ENCODE measurements at regions of chr1 and their contacts with region 1.

Region 1: DNA sequence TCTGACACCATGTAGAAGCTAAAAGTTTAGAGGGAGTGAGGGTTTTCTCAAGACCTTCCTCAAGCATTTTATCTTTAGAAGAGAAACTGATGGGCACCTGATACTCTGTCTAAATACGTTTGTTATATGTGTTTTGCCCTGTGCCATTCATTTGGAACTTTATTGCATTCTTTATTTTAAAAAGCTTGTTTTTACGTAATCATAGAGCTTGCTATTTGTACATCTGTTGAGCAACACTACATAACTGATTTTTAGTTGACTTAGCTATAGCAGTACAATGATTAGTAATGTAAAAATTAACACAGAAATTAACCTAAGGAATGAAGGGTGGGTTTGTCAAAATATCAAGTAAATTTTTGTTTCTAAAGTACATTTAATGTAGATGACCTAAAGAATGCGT is 88.5 kb downstream of the RUNX3 start:
- DNase-seq: no peak
- ATAC-seq: no peak
- H3K4me3 ChIP-seq: no peak overlapping the region
- H3K27ac ChIP-seq: no peak overlapping the region
- H3K4me1 ChIP-seq: peaks cover 0 to 14% (median 0%) of the 10 kb centered on the region in 9 donors
- H3K27me3 ChIP-seq: no peaks in the 10 kb centered on the region
- CTCF ChIP-seq: no peak

Region 2: DNA sequence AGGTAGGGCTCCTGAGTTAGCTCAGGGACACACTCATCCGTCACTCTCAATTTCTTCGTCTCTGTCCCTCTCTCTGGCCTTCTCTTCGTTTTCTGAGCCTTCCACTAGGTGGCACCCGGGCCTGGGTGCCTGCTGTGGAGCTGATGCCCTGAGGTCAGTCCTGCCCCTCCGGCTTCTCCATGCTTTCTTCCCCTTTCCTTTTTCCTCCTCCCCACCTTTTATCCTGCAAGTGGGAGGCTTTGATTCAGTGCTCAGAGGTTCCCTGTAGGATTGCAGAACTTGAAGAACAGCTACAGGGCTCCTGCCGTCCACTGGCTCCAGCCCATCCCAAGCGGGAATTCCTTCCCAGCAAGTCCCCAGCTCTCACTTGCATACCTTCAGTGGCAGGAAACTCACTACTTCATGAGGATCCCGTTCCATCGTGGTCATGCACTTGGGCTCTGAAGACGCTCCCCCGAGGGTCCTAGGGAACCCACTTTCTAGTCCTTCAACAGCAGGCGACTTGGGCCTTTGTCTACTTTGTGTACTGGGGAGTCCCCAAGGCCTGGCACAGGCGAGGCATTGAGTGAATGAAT is 152.9 kb before region 1 on chr1:
- intact Hi-C with region 1: loop called in 2 of 10 experiments (anchors 2 to 5 kb)
- DNase-seq: peak; percentile 72 to 78
- ATAC-seq: peak; percentile 78 to 94 (median 91)
- H3K4me3 ChIP-seq: no peak overlapping the region
- H3K27ac ChIP-seq: peak overlapping the region in 7 of 10 donors; percentile 3 to 44 (median 28)
- H3K4me1 ChIP-seq: peaks cover 0 to 33% (median 20%) of the 10 kb centered on the region in 9 donors
- H3K27me3 ChIP-seq: no peaks in the 10 kb centered on the region
- CTCF ChIP-seq: peak; percentile 76 to 94 (median 88)

Measured in heart right ventricle (tissue), 16 donors.